Heart right ventricle (tissue), 16 donors: ENCODE measurements at regions of chr18 and their contacts with region 1.

Region 1: DNA sequence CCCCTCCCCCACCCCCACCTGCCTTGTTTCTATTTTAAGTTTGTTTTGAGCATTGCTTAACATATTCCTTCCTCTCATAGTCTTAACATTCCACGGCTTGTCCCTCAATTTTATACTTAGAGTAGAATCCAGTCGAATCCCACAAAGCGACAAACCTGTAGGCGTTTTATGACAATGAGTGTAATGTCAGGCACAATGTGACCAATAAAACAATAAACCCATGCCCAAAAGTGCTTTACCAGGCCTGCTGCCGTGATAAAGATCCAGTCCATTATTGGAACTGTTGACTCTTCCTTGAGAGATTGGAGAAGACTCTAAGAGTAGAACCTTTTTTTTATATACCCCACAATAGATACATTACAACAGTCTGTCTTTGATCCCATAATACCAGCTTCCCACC is 6.2 kb upstream of the MRO start:
- DNase-seq: no peak
- ATAC-seq: no peak
- H3K4me3 ChIP-seq: no peak overlapping the region
- H3K27ac ChIP-seq: no peak overlapping the region
- H3K4me1 ChIP-seq: peaks cover 0 to 6% (median 0%) of the 10 kb centered on the region in 9 donors
- H3K27me3 ChIP-seq: no peaks in the 10 kb centered on the region
- CTCF ChIP-seq: no peak

Region 2: GRCh38 chr18:50866765-50867164 is 40.7 kb after region 1 on chr18:
- intact Hi-C with region 1: loop called in 7 of 10 experiments (anchors 2 to 5 kb)
- DNase-seq: no peak
- ATAC-seq: peak in 6 of 8 donors; percentile 17 to 90 (median 58)
- H3K4me3 ChIP-seq: no peak overlapping the region
- H3K27ac ChIP-seq: no peak overlapping the region
- H3K4me1 ChIP-seq: peaks cover 0 to 18% (median 0%) of the 10 kb centered on the region in 9 donors
- H3K27me3 ChIP-seq: no peaks in the 10 kb centered on the region
- CTCF ChIP-seq: peak in 6 of 9 donors; percentile 27 to 44 (median 38)

Region 3: GRCh38 chr18:50895350-50896045 is 69.5 kb after region 1 on chr18:
- intact Hi-C with region 1: no loop called
- DNase-seq: no peak
- ATAC-seq: no peak
- H3K4me3 ChIP-seq: no peak overlapping the region
- H3K27ac ChIP-seq: no peak overlapping the region
- H3K4me1 ChIP-seq: no peaks in the 10 kb centered on the region
- H3K27me3 ChIP-seq: no peaks in the 10 kb centered on the region
- CTCF ChIP-seq: no peak